ENCODE measurements at regions of chr2 and their contacts with region 1.

Region 1: DNA sequence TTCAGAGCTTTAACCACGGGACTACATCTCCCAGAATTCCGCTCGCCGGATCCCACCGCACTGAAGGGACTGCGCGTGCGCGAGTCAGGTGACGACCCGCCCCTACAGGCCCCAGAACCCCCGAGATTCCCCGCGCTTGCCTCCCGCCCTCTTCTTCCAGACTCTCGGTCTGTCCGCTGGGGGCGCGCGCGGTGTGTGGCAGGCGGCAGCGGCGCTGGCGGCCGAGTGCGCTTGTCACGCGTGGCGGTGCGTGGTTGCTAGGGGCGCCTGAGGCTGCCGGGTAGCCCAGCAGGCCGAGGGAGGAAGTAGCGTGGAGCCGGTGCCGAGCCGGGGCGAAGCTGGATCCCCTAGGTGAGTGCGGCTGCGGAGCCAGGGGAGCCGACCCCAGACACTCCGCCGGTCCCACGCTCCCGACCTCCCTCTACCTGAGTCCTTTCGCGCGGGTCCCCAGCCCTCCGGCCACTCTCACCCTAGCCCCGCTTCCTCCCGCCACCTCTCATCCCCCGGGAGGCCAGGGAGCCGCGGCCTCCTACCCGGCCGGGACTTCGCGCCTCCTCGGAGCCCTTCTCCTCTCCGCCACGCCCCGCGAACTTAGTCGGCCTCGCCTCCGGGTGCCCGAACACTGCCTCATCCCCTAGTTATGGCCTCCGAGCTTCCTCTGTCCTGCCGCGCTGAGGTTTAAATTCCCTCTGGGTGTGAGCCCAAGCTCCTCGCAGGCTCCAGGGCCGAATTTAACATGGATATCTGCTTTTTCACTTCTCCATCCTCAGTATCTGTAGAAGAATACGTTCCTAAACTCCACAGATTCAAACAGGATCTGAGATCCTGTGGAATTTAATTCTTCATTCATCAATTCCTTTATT is at the start of gene TTLL4:
- DNase-seq: peak; percentile 95
- H3K4me3 ChIP-seq: peak within 1 kb of the TSS; percentile 89 to 98 (median 93)
- H3K27ac ChIP-seq: peak within 1 kb of the TSS; percentile 60
- H3K4me1 ChIP-seq: peaks cover 14% of the 10 kb centered on the region
- H3K27me3 ChIP-seq: no peaks in the 10 kb centered on the region
- CTCF ChIP-seq: peak; percentile 81 to 82
- POLR2A ChIP-seq: peak; percentile 84
- total RNA-seq, gene TTLL4: 41.0 and 45.0 TPM in 2 replicates

Region 2: DNA sequence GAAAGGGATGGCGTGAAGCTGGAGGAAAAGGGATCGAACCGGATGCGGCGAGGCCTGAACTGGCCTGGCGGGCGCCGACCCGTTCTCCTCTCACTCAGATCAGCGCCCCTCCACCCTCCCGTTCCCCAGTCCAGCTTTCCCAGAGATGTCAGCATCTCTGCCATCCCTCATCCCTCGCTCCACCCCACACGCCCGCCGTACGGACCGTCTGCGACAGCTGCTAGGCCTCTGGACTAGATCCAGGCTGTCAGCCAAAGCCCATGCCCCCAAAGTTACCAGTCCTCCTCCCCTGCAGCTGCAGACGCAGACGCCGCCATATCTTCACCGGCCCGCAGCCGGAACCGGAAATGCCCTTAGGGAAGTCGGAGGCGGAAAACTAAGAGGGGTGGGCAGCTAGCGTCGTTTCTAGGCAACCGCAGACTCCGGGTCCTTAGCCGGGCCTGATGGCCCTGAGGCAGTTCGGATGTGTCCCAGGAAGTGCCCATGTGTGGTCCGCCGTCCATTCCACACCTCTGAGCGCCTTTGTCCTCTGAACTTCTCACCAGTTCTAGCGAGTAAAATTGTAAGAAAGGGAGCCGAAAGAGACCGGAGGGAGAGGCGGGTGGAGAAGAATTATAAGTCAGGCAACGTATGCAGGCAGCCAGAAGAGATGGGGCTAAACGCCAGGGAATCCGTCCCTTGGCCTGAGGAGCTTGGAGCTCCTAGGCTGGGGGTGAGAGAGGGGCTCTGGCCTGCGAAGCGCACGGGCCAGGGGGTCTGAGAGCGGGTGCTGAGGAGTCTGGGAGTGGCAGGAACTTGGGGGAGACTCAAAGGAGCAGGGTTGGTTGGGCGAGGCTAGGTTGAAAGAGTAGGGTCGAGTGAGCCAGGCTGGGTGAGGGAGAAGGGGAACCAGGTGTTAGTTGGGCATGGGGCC is 39.0 kb before region 1 on chr2 and contains the starts of genes RNF25 and STK36:
- CTCF ChIA-PET with region 1: interaction called, 7 read pairs
- POLR2A ChIA-PET with region 1: no interaction called
- dilution Hi-C with region 1: no loop called
- intact Hi-C with region 1: loop called (anchors 1 kb)
- DNase-seq: peak; percentile 82
- H3K4me3 ChIP-seq: peak within 1 kb of the TSS; percentile 54 to 87 (median 82)
- H3K27ac ChIP-seq: peak within 1 kb of the TSS; percentile 79
- H3K4me1 ChIP-seq: peaks cover 16% of the 10 kb centered on the region
- H3K27me3 ChIP-seq: no peaks in the 10 kb centered on the region
- CTCF ChIP-seq: no peak
- POLR2A ChIP-seq: peak; percentile 86
- total RNA-seq, gene RNF25: 38.2 and 39.1 TPM in 2 replicates
- total RNA-seq, gene STK36: 34.9 and 40.9 TPM in 2 replicates

Region 3: GRCh38 chr2:218691234-218691633 is 19.7 kb before region 1 on chr2:
- CTCF ChIA-PET with region 1: interaction called, 11 read pairs
- POLR2A ChIA-PET with region 1: no interaction called
- dilution Hi-C with region 1: no loop called
- intact Hi-C with region 1: no loop called
- DNase-seq: no peak
- H3K4me3 ChIP-seq: no peak overlapping the region
- H3K27ac ChIP-seq: no peak overlapping the region
- H3K4me1 ChIP-seq: no peaks in the 10 kb centered on the region
- H3K27me3 ChIP-seq: no peaks in the 10 kb centered on the region
- CTCF ChIP-seq: no peak
- POLR2A ChIP-seq: no peak

Region 4: GRCh38 chr2:218727502-218728165 is 16.7 kb after region 1 on chr2:
- CTCF ChIA-PET with region 1: interaction called, 30 read pairs
- POLR2A ChIA-PET with region 1: no interaction called
- dilution Hi-C with region 1: no loop called
- intact Hi-C with region 1: loop called (anchors 1 kb)
- DNase-seq: peak; percentile 18
- H3K4me3 ChIP-seq: no peak overlapping the region
- H3K27ac ChIP-seq: no peak overlapping the region
- H3K4me1 ChIP-seq: peaks cover 15% of the 10 kb centered on the region
- H3K27me3 ChIP-seq: no peaks in the 10 kb centered on the region
- CTCF ChIP-seq: peak; percentile 13 to 24
- POLR2A ChIP-seq: no peak

Region 5: GRCh38 chr2:218733171-218734021 is 22.5 kb after region 1 on chr2:
- CTCF ChIA-PET with region 1: interaction called, 30 read pairs
- POLR2A ChIA-PET with region 1: no interaction called
- dilution Hi-C with region 1: no loop called
- intact Hi-C with region 1: loop called (anchors 1 kb)
- DNase-seq: no peak
- H3K4me3 ChIP-seq: no peak overlapping the region
- H3K27ac ChIP-seq: no peak overlapping the region
- H3K4me1 ChIP-seq: peaks cover 16% of the 10 kb centered on the region
- H3K27me3 ChIP-seq: no peaks in the 10 kb centered on the region
- CTCF ChIP-seq: no peak
- POLR2A ChIP-seq: no peak

Region 6: GRCh38 chr2:218745559-218746469 is 34.9 kb after region 1 on chr2:
- CTCF ChIA-PET with region 1: interaction called, 11 read pairs
- POLR2A ChIA-PET with region 1: no interaction called
- dilution Hi-C with region 1: no loop called
- intact Hi-C with region 1: no loop called
- DNase-seq: no peak
- H3K4me3 ChIP-seq: no peak overlapping the region
- H3K27ac ChIP-seq: no peak overlapping the region
- H3K4me1 ChIP-seq: no peaks in the 10 kb centered on the region
- H3K27me3 ChIP-seq: no peaks in the 10 kb centered on the region
- CTCF ChIP-seq: no peak
- POLR2A ChIP-seq: no peak

Region 7: GRCh38 chr2:218781691-218782527 is 71.0 kb after region 1 on chr2 and contains the start of gene CYP27A1:
- CTCF ChIA-PET with region 1: interaction called, 11 read pairs
- POLR2A ChIA-PET with region 1: interaction called, 3 read pairs
- dilution Hi-C with region 1: no loop called
- intact Hi-C with region 1: no loop called
- DNase-seq: peak; percentile 43
- H3K4me3 ChIP-seq: peak within 1 kb of the TSS; percentile 44 to 66 (median 53)
- H3K27ac ChIP-seq: no peak within 1 kb of the TSS
- H3K4me1 ChIP-seq: peaks cover 6% of the 10 kb centered on the region
- H3K27me3 ChIP-seq: no peaks in the 10 kb centered on the region
- CTCF ChIP-seq: no peak
- POLR2A ChIP-seq: no peak
- total RNA-seq, gene CYP27A1: 12.6 and 15.1 TPM in 2 replicates

Measured in endothelial cell of umbilical vein (primary cell).